Activated B cell treated with CpG ODN at 0.5 μM for 24 hours (primary cell): ENCODE measurements at regions of chr15 and their contacts with region 1.

Region 1: GRCh38 chr15:74906446-74907162 is at the start of gene FAM219B:
- DNase-seq: peak; percentile 77
- ATAC-seq: peak; percentile 92
- H3K4me3 Mint-ChIP-seq: peak within 1 kb of the TSS; percentile 98
- H3K27ac Mint-ChIP-seq: peak within 1 kb of the TSS; percentile 97
- H3K4me1 Mint-ChIP-seq: peaks cover 41% of the 10 kb centered on the region
- H3K27me3 Mint-ChIP-seq: no peaks in the 10 kb centered on the region
- CTCF ChIP-seq: no peak
- total RNA-seq, gene FAM219B: 76.0 and 90.4 TPM in 2 replicates

Region 2: GRCh38 chr15:74635228-74635627 is 271.4 kb before region 1 on chr15:
- CTCF ChIA-PET with region 1: interaction called, 54 read pairs
- POLR2A ChIA-PET with region 1: no interaction called
- intact Hi-C with region 1: loop called (anchors 1 kb)
- DNase-seq: peak; percentile 61
- ATAC-seq: peak; percentile 64
- H3K4me3 Mint-ChIP-seq: no peak overlapping the region
- H3K27ac Mint-ChIP-seq: no peak overlapping the region
- H3K4me1 Mint-ChIP-seq: peaks cover 18% of the 10 kb centered on the region
- H3K27me3 Mint-ChIP-seq: no peaks in the 10 kb centered on the region
- CTCF ChIP-seq: no peak

Region 3: DNA sequence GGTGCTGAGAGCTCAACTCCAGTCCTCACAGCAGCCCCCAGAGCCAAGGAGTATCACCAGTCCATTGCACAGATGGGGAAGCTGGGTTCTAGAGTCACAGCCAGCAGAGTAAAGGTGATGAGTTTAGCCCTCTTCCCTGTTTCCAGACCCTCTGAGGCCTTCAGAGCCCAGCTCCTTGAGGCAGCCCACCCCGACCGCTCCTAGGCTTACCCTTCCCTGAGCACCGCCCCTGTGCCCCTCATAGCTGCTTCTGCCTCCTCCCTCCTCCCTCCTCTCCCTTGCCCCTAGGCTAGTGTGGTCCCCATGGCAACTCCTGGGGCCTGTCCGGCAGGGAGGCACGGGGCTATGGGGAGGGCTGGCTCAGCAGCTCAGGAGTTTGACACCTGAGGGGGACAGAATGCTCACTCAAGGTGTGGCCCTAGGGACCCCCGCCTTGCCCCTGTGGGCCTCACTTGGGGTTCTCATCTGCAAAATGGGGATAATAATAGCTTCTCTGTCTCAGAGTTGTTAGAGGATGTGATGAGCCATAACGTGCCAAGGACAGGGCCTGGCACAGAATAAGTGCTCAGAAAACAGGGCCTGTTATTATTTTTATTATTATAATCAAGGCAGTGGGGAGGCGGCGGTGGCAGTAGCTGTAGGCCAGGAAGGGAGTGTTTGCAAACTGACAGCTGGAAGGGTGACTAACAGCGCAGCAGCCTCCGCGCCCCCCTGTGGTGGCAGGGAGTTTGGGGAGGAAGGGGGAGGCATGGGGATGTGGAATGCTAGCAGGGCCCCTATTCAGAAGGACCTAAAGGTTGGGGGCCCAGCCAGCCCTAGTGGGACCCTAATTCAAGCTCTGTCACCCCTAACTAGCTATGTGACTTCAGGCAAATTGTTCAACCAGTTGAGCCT is 113.2 kb before region 1 on chr15:
- CTCF ChIA-PET with region 1: interaction called, 11 read pairs
- POLR2A ChIA-PET with region 1: interaction called, 5 read pairs
- intact Hi-C with region 1: no loop called
- DNase-seq: no peak
- ATAC-seq: no peak
- H3K4me3 Mint-ChIP-seq: peak overlapping the region; percentile 70
- H3K27ac Mint-ChIP-seq: peak overlapping the region; percentile 99
- H3K4me1 Mint-ChIP-seq: peaks cover 96% of the 10 kb centered on the region
- H3K27me3 Mint-ChIP-seq: no peaks in the 10 kb centered on the region
- CTCF ChIP-seq: no peak

Region 4: DNA sequence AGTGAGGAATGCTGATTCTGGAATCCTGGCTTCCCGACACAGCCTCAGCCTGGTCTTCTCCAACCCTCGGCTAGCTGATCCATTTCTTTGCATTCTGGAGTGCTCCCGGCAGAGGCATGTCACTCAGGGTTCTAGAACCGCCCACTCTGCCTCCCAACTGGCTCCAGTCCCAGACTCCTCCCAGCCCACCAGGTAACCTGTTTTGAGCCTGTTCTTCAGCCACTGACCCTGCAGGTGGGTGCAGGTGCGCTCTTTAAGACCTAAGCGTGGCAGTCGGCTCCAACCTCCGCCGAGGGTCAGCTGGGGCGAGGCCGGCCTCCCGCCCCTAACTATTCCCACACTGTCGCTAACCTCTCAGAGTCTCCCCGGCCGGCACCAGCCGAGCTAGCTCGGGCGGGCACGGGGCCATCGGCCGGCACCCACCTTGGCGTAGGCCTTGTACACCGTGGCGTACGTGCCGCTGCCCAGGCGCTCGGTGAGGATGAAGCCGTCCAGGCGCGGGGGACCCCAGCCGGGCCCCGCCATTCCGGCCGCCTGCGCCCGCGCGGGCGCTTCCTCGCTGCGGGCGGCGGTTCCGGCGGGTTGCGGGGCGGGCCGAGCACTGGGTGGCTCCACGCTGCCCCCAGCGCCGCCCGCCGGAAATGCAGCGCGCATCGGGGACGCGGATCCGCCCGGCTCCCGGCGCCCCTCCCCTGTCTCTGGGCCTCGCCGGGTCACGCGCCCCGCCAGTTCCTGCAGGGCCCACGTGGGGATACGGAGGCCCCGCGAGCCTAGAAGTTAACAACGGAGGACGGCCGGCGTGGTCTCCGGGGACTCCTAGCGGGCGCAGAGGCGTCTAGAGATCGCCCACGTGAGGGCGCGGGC is 63.8 kb before region 1 on chr15 and contains the start of gene ULK3:
- CTCF ChIA-PET with region 1: interaction called, 14 read pairs
- POLR2A ChIA-PET with region 1: interaction called, 7 read pairs
- intact Hi-C with region 1: loop called (anchors 1 kb)
- DNase-seq: peak; percentile 97
- ATAC-seq: peak; percentile 95
- H3K4me3 Mint-ChIP-seq: peak within 1 kb of the TSS; percentile 91
- H3K27ac Mint-ChIP-seq: peak within 1 kb of the TSS; percentile 77
- H3K4me1 Mint-ChIP-seq: peaks cover 48% of the 10 kb centered on the region
- H3K27me3 Mint-ChIP-seq: no peaks in the 10 kb centered on the region
- CTCF ChIP-seq: no peak
- total RNA-seq, gene ULK3: 43.6 and 52.1 TPM in 2 replicates

Region 5: GRCh38 chr15:74884428-74885223 is 22.0 kb before region 1 on chr15:
- CTCF ChIA-PET with region 1: interaction called, 18 read pairs
- POLR2A ChIA-PET with region 1: interaction called, 13 read pairs
- intact Hi-C with region 1: no loop called
- DNase-seq: no peak
- ATAC-seq: no peak
- H3K4me3 Mint-ChIP-seq: no peak overlapping the region
- H3K27ac Mint-ChIP-seq: no peak overlapping the region
- H3K4me1 Mint-ChIP-seq: peaks cover 14% of the 10 kb centered on the region
- H3K27me3 Mint-ChIP-seq: no peaks in the 10 kb centered on the region
- CTCF ChIP-seq: no peak

Region 6: GRCh38 chr15:74937596-74938296 is 31.1 kb after region 1 on chr15 and contains the start of gene COX5A:
- CTCF ChIA-PET with region 1: no interaction called
- POLR2A ChIA-PET with region 1: interaction called, 10 read pairs
- intact Hi-C with region 1: loop called (anchors 1 kb)
- DNase-seq: peak; percentile 86
- ATAC-seq: peak; percentile 97
- H3K4me3 Mint-ChIP-seq: peak within 1 kb of the TSS; percentile 86
- H3K27ac Mint-ChIP-seq: peak within 1 kb of the TSS; percentile 90
- H3K4me1 Mint-ChIP-seq: peaks cover 34% of the 10 kb centered on the region
- H3K27me3 Mint-ChIP-seq: no peaks in the 10 kb centered on the region
- CTCF ChIP-seq: no peak
- total RNA-seq, gene COX5A: 150 and 159 TPM in 2 replicates

Region 7: DNA sequence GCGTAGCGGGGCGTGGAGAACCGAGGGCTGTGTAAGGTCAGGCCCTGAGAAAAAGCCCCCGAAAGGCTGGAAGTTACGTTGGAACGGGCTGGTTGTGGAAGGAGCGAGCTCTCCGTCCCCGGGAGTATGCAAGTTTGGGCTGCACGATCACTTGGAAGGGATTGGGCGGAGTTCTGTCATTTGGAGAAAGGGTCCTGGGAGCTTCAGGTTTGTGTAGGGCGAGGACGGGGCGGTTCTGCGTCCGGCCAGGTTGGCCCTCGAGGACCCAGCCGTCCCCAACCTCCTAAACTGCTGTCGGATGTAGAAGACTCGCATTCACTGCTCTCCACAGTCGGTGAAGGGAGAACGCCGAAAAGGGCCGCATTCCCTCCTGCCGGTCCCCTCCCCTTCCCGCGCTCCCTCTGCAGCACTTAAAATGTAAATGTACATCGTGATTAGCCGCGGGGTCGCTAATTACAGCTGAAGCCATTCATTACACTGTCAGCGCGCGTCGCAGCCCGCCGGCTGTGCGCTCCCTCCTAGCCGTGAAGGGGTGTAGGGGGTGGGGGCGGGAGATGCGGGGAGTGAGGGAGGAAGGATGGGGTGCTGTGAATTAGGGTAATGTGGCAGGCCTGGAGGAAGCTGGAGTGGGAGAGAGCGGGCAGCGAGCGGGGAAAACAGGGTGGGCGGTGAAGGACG is 52.4 kb after region 1 on chr15:
- CTCF ChIA-PET with region 1: no interaction called
- POLR2A ChIA-PET with region 1: no interaction called
- intact Hi-C with region 1: no loop called
- DNase-seq: no peak
- ATAC-seq: no peak
- H3K4me3 Mint-ChIP-seq: peak overlapping the region; percentile 61
- H3K27ac Mint-ChIP-seq: no peak overlapping the region
- H3K4me1 Mint-ChIP-seq: peaks cover 34% of the 10 kb centered on the region
- H3K27me3 Mint-ChIP-seq: peaks cover 29% of the 10 kb centered on the region
- CTCF ChIP-seq: no peak

Region 8: DNA sequence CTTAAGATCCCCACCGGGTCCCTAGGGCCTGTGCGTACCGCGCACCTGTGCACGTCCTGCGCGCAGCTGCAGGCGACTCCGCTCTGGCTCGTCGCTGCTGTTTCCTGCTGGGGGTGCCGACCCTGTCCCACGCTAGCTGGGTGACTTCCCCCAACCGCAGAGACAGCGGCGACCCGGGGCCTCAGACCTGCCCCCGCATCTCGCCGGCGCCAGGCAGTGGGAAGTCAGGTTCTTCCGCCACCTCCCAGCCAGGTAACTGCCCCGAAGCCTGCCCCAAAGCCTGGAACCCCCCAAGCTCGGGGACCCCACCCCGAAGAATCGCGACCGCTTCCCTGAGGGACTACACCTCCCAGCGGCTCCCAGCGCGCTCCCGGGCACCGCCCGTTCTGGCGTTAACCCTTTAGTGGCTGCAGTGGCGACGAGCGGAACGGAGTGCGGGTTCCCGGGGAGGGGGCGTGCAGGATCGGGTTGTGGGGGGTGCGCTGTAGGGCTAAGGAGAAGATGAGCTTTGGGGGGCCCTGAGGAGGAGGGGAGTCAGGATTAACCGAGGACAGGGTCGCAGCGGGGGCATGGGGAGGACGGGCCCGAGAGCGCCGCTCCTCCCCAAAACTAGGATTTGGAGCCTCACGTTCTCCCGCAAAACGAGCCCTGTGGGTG is 440.7 kb after region 1 on chr15:
- CTCF ChIA-PET with region 1: no interaction called
- POLR2A ChIA-PET with region 1: no interaction called
- intact Hi-C with region 1: no loop called
- DNase-seq: peak; percentile 69
- ATAC-seq: peak; percentile 77
- H3K4me3 Mint-ChIP-seq: peak overlapping the region; percentile 86
- H3K27ac Mint-ChIP-seq: peak overlapping the region; percentile 85
- H3K4me1 Mint-ChIP-seq: peaks cover 46% of the 10 kb centered on the region
- H3K27me3 Mint-ChIP-seq: peaks cover 1% of the 10 kb centered on the region
- CTCF ChIP-seq: no peak